IMR-90 (cell line): ENCODE measurements at regions of chr11 and their contacts with region 1.

Region 1: DNA sequence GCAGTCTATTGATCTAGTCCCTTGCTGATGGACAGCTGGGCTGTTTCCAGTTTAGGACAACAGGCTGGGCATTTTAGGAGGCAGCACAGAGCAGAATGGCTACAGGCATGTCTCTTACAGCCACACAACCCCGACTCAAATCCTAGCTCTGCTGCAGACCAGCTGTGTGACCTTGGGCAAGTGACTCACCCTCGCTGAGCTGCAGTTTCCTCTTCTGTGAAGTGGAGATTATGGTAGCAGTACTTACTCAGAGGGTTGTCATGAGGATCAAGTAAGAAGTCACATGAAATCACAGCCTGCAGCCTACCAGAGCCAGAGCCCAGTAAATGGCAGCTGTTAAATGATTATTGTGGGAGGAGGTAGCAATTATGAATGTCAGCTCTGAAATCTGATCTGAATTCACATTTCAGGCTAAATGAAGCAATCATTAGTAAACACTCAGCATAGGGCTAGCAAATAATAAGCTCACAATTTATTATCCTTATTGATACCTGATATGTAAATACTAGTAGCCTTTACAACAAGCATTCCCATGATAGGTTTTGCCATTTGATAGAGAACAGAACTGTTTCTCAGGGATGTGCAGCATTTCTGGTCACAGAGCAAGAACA is 58.9 kb downstream of the MYEOV start:
- DNase-seq: peak; percentile 99
- ATAC-seq: peak; percentile 90
- H3K4me3 ChIP-seq: no peak overlapping the region
- H3K27ac ChIP-seq: peak overlapping the region; percentile 85
- H3K4me1 ChIP-seq: peaks cover 16% of the 10 kb centered on the region
- H3K27me3 ChIP-seq: no peaks in the 10 kb centered on the region
- CTCF ChIP-seq: no peak
- POLR2A ChIP-seq: no peak
- RAD21 ChIP-seq: peak; percentile 36

Region 2: GRCh38 chr11:69055598-69056516 is 297.0 kb before region 1 on chr11:
- CTCF ChIA-PET with region 1: no interaction called
- POLR2A ChIA-PET with region 1: no interaction called
- dilution Hi-C with region 1: no loop called
- in situ Hi-C with region 1: no loop called
- intact Hi-C with region 1: no loop called
- DNase-seq: no peak
- ATAC-seq: no peak
- H3K4me3 ChIP-seq: no peak overlapping the region
- H3K27ac ChIP-seq: no peak overlapping the region
- H3K4me1 ChIP-seq: no peaks in the 10 kb centered on the region; the same call in 1 of the 2 replicates
- H3K27me3 ChIP-seq: no peaks in the 10 kb centered on the region
- CTCF ChIP-seq: no peak
- POLR2A ChIP-seq: no peak
- RAD21 ChIP-seq: no peak

Region 3: DNA sequence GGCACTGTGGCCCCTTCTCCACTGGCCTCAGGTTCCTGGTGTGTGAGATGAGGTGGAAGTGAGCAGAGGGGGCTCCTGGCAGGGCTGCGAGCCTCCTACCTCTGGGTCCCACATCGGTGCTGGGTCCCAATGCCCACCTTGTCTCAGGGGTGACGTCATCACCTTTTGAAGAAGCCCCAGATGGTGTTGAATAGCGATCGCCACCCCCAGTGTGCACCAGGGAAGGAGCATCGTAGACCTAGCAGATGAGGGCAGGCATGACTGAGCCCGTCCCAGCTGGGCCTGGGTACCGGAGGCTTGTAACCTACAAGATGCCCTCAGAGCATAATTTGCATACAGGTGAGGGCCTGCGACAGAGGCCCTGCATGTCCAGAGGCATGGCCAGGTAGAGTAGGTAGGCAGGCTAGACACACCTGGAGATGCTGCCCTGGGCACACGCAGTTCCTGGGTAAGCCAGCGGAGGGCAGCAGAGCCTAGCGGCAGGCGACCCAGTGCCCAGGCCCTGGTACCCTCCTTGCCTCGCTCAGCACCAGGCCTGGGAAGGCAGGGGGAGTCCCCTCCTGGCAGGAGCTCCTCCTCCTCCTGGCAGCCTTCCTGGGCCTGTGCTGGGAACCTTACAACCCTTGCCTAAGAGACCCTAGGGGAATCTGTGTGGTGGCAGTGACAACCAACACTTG is 251.6 kb before region 1 on chr11:
- CTCF ChIA-PET with region 1: no interaction called
- POLR2A ChIA-PET with region 1: no interaction called
- dilution Hi-C with region 1: no loop called
- in situ Hi-C with region 1: no loop called
- intact Hi-C with region 1: loop called (anchors 2 kb)
- DNase-seq: peak; percentile 73
- ATAC-seq: peak; percentile 94
- H3K4me3 ChIP-seq: no peak overlapping the region
- H3K27ac ChIP-seq: no peak overlapping the region
- H3K4me1 ChIP-seq: peaks cover 3% of the 10 kb centered on the region; the same call in 1 of the 2 replicates
- H3K27me3 ChIP-seq: no peaks in the 10 kb centered on the region
- CTCF ChIP-seq: peak; percentile 97
- POLR2A ChIP-seq: peak; percentile 52; the same call in 1 of the 2 replicates
- RAD21 ChIP-seq: peak; percentile 99

Region 4: DNA sequence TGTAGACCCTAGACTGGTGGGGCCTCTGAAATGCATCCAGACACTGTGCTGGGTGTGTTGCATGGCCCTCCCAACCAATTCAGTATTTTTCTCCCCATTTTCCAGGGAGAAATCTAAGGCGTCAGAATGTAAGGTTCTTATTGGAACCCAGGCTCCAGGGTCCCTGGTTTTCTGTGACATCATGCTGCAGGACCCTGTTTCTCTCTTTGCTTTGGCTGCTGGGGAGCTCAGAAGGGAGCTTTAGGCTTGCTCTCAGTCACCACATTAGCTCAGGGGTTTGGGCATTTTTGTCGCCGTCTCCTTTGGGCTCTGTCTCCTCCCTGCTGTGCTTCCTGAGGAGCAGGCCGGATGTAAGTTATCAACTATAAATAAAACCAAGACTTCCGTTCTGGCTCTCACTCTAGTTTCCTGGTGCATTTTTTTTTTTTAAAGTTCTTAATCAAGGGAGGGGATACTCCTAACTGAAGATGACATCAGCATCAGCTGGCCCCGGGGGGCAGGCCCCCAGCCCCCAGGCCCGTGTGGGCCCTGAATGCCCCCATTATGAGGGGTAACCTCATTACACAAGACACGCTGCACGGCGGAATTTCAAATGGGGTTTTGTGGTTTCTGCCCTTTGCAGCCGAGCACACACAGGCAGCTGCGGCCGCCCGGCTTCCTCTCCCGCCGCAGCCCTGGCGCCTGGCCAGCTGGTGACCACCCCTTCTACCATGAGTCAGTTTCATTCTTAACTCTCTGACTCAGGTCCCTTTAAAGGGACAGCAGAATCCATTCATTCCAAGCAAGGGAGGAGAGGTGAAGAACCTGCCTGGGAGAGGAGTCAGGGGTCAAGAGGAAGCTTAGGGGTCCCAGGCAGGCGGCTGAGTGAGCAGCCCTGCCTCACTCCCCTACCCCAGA is 55.7 kb before region 1 on chr11:
- CTCF ChIA-PET with region 1: no interaction called
- POLR2A ChIA-PET with region 1: interaction called, 3 read pairs
- dilution Hi-C with region 1: no loop called
- in situ Hi-C with region 1: no loop called
- intact Hi-C with region 1: loop called (anchors 1 kb)
- DNase-seq: peak; percentile 99
- ATAC-seq: peak; percentile 59
- H3K4me3 ChIP-seq: no peak overlapping the region
- H3K27ac ChIP-seq: peak overlapping the region; percentile 92
- H3K4me1 ChIP-seq: peaks cover 47% of the 10 kb centered on the region
- H3K27me3 ChIP-seq: no peaks in the 10 kb centered on the region
- CTCF ChIP-seq: no peak
- POLR2A ChIP-seq: no peak
- RAD21 ChIP-seq: peak; percentile 33; the same call in 1 of the 2 replicates

Region 5: GRCh38 chr11:69443138-69443967 is 90.5 kb after region 1 on chr11:
- CTCF ChIA-PET with region 1: no interaction called
- POLR2A ChIA-PET with region 1: no interaction called
- dilution Hi-C with region 1: no loop called
- in situ Hi-C with region 1: no loop called
- intact Hi-C with region 1: loop called (anchors 2 kb)
- DNase-seq: peak; percentile 94
- ATAC-seq: peak; percentile 93
- H3K4me3 ChIP-seq: peak overlapping the region; percentile 36
- H3K27ac ChIP-seq: peak overlapping the region; percentile 95
- H3K4me1 ChIP-seq: peaks cover 27% of the 10 kb centered on the region
- H3K27me3 ChIP-seq: no peaks in the 10 kb centered on the region
- CTCF ChIP-seq: no peak
- POLR2A ChIP-seq: peak; percentile 84
- RAD21 ChIP-seq: no peak; the same call in 1 of the 2 replicates

Region 6: GRCh38 chr11:69636312-69637197 is 283.7 kb after region 1 on chr11:
- CTCF ChIA-PET with region 1: no interaction called
- POLR2A ChIA-PET with region 1: interaction called, 11 read pairs
- dilution Hi-C with region 1: no loop called
- in situ Hi-C with region 1: no loop called
- intact Hi-C with region 1: loop called (anchors 5 kb)
- DNase-seq: peak; percentile 90
- ATAC-seq: peak; percentile 48
- H3K4me3 ChIP-seq: peak overlapping the region; percentile 1; the same call in 1 of the 2 replicates
- H3K27ac ChIP-seq: peak overlapping the region; percentile 60
- H3K4me1 ChIP-seq: peaks cover 5% of the 10 kb centered on the region
- H3K27me3 ChIP-seq: no peaks in the 10 kb centered on the region
- CTCF ChIP-seq: no peak
- POLR2A ChIP-seq: no peak
- RAD21 ChIP-seq: peak; percentile 28